ENCODE measurements at regions of chr11 and their contacts with region 1.

Region 1: GRCh38 chr11:100687630-100688395 is 725 bp downstream of the ARHGAP42 start:
- DNase-seq: peak; percentile 78
- H3K4me3 ChIP-seq: peak overlapping the region; percentile 85
- H3K4me3 Mint-ChIP-seq: peak overlapping the region; percentile 100
- H3K27ac Mint-ChIP-seq: peak overlapping the region; percentile 89
- H3K4me1 ChIP-seq: peaks cover 9% of the 10 kb centered on the region
- H3K4me1 Mint-ChIP-seq: peaks cover 21% of the 10 kb centered on the region
- H3K27me3 ChIP-seq: no peaks in the 10 kb centered on the region
- H3K27me3 Mint-ChIP-seq: no peaks in the 10 kb centered on the region
- CTCF ChIP-seq: peak; percentile 92

Region 2: DNA sequence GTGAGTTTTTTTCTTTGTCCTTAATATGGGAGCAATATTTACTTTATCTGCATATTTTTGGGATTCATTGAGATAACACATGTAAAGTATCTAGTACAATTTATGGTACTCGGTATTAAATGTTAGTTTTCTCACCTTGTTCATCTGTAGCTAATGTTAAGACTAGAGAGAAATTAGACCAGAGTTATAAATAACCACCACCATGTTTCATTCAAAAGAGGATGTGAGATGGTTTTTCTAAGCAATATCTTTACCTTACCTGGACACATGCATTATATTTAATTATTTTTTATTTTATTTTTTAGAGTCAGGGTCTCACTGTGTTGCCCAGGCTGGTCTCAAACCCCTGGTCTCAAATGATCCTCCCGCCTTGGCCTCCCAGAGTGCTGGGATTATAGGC is 17.6 kb after region 1 on chr11:
- CTCF ChIA-PET with region 1: interaction called, 12 read pairs
- POLR2A ChIA-PET with region 1: no interaction called
- intact Hi-C with region 1: no loop called
- DNase-seq: no peak
- H3K4me3 ChIP-seq: no peak overlapping the region
- H3K4me3 Mint-ChIP-seq: no peak overlapping the region
- H3K27ac Mint-ChIP-seq: no peak overlapping the region
- H3K4me1 ChIP-seq: no peaks in the 10 kb centered on the region
- H3K4me1 Mint-ChIP-seq: no peaks in the 10 kb centered on the region
- H3K27me3 ChIP-seq: no peaks in the 10 kb centered on the region
- H3K27me3 Mint-ChIP-seq: no peaks in the 10 kb centered on the region
- CTCF ChIP-seq: no peak

Region 3: GRCh38 chr11:100739666-100740065 is 51.9 kb after region 1 on chr11:
- CTCF ChIA-PET with region 1: no interaction called
- POLR2A ChIA-PET with region 1: no interaction called
- intact Hi-C with region 1: loop called (anchors 2 kb)
- DNase-seq: peak; percentile 46 to 74
- H3K4me3 ChIP-seq: no peak overlapping the region
- H3K4me3 Mint-ChIP-seq: no peak overlapping the region
- H3K27ac Mint-ChIP-seq: peak overlapping the region; percentile 40
- H3K4me1 ChIP-seq: peaks cover 22% of the 10 kb centered on the region
- H3K4me1 Mint-ChIP-seq: peaks cover 40% of the 10 kb centered on the region
- H3K27me3 ChIP-seq: no peaks in the 10 kb centered on the region
- H3K27me3 Mint-ChIP-seq: no peaks in the 10 kb centered on the region
- CTCF ChIP-seq: no peak

Region 4: DNA sequence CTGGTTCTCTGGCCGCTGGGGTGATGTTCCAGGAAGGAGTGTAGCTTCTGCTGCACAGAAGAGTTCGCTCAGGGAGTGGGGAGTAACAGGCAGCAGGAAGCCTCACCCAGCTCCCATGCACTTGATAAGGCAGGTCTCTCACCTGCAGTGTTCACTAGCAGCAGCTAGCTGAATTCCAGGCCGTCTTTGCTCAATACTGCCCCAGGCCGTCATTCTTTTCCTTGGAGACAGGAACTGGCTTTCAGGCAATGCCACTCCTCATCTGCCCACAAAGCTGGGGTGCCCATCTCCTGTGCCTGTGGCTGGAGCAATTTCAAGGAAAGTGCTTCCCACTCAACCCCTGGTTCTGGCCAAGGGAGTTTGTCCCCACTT is 65.3 kb after region 1 on chr11:
- CTCF ChIA-PET with region 1: interaction called, 5 read pairs
- POLR2A ChIA-PET with region 1: no interaction called
- intact Hi-C with region 1: loop called (anchors 1 kb)
- DNase-seq: peak; percentile 85 to 89
- H3K4me3 ChIP-seq: no peak overlapping the region
- H3K4me3 Mint-ChIP-seq: no peak overlapping the region
- H3K27ac Mint-ChIP-seq: peak overlapping the region; percentile 81
- H3K4me1 ChIP-seq: peaks cover 33% of the 10 kb centered on the region
- H3K4me1 Mint-ChIP-seq: peaks cover 16% of the 10 kb centered on the region
- H3K27me3 ChIP-seq: no peaks in the 10 kb centered on the region
- H3K27me3 Mint-ChIP-seq: no peaks in the 10 kb centered on the region
- CTCF ChIP-seq: peak in 1 of 2 experiments; percentile 35

Region 5: GRCh38 chr11:100855466-100856067 is 167.8 kb after region 1 on chr11:
- CTCF ChIA-PET with region 1: interaction called, 10 read pairs
- POLR2A ChIA-PET with region 1: no interaction called
- intact Hi-C with region 1: loop called (anchors 1 kb)
- DNase-seq: peak in 1 of 2 experiments; percentile 65
- H3K4me3 ChIP-seq: no peak overlapping the region
- H3K4me3 Mint-ChIP-seq: no peak overlapping the region
- H3K27ac Mint-ChIP-seq: no peak overlapping the region
- H3K4me1 ChIP-seq: peaks cover 32% of the 10 kb centered on the region
- H3K4me1 Mint-ChIP-seq: peaks cover 27% of the 10 kb centered on the region
- H3K27me3 ChIP-seq: no peaks in the 10 kb centered on the region
- H3K27me3 Mint-ChIP-seq: no peaks in the 10 kb centered on the region
- CTCF ChIP-seq: peak; percentile 64 to 81